Heart right ventricle (tissue), 16 donors: ENCODE measurements at regions of chr13 and their contacts with region 1.

Region 1: DNA sequence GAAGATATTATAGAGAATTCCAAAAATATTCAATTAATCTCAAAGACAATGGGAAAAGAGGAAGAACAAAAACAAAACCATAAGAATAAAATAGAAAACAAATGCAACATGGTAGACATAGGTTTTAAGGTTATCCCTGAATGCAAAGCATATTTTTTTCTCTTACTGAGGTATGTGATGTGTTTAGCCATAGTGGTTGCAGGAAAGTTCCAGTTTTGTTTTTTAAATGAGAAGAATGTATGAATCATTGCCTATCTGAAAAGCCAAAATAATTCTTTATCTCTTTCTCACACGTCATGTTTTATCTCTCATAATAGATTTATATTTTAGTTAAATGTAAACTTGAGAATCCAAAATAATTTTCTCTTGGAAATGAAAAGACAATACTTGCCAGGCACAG is 2591.7 kb upstream of the PCDH20 start:
- DNase-seq: no peak
- ATAC-seq: no peak
- H3K4me3 ChIP-seq: no peak overlapping the region
- H3K27ac ChIP-seq: no peak overlapping the region
- H3K4me1 ChIP-seq: no peaks in the 10 kb centered on the region
- H3K27me3 ChIP-seq: no peaks in the 10 kb centered on the region
- CTCF ChIP-seq: no peak

Region 2: GRCh38 chr13:64029343-64030093 is 22.2 kb after region 1 on chr13:
- intact Hi-C with region 1: loop called in 1 of 10 experiments (anchors 1 kb)
- DNase-seq: no peak
- ATAC-seq: no peak
- H3K4me3 ChIP-seq: no peak overlapping the region
- H3K27ac ChIP-seq: no peak overlapping the region
- H3K4me1 ChIP-seq: no peaks in the 10 kb centered on the region
- H3K27me3 ChIP-seq: no peaks in the 10 kb centered on the region
- CTCF ChIP-seq: no peak